GM10248 (cell line): ENCODE measurements at regions of chr1 and their contacts with region 1.

Region 1: GRCh38 chr1:150561974-150562445 is 12.8 kb downstream of the ADAMTSL4 start:
- DNase-seq: peak; percentile 85
- CTCF ChIP-seq: no peak

Region 2: GRCh38 chr1:150221552-150221951 is 340.5 kb before region 1 on chr1:
- CTCF ChIA-PET with region 1: no interaction called
- POLR2A ChIA-PET with region 1: no interaction called
- DNase-seq: no peak
- CTCF ChIP-seq: peak; percentile 43

Region 3: GRCh38 chr1:150259758-150260669 is 302.0 kb before region 1 on chr1:
- CTCF ChIA-PET with region 1: interaction called, 34 read pairs
- POLR2A ChIA-PET with region 1: no interaction called
- DNase-seq: no peak
- CTCF ChIP-seq: no peak

Region 4: DNA sequence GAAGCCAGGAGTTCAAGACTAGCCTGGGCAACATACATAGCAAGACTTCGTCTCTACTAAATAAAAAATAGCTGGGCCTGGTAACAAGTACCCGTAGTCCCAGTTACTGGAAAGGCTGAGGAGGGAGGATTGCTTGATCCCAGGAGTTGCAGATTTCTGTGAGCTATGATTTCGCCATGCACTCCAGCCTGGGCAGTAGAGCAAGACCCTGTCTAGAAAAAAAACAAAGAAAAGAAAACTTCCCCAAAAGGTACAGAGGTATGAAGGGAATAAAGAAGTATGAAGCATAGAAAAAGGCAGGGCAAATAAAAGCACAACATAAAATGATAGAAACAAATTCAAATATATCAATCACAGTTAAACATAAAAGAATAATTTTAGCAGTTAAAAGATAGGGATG is 169.4 kb before region 1 on chr1:
- CTCF ChIA-PET with region 1: no interaction called
- POLR2A ChIA-PET with region 1: no interaction called
- DNase-seq: no peak
- CTCF ChIP-seq: no peak

Region 5: GRCh38 chr1:150543500-150544141 is 18.4 kb before region 1 on chr1:
- CTCF ChIA-PET with region 1: interaction called, 119 read pairs
- POLR2A ChIA-PET with region 1: no interaction called
- DNase-seq: no peak
- CTCF ChIP-seq: no peak

Region 6: GRCh38 chr1:150621497-150622302 is 59.7 kb after region 1 on chr1:
- CTCF ChIA-PET with region 1: interaction called, 151 read pairs
- POLR2A ChIA-PET with region 1: interaction called, 7 read pairs
- DNase-seq: peak; percentile 55
- CTCF ChIP-seq: peak; percentile 65

Region 7: DNA sequence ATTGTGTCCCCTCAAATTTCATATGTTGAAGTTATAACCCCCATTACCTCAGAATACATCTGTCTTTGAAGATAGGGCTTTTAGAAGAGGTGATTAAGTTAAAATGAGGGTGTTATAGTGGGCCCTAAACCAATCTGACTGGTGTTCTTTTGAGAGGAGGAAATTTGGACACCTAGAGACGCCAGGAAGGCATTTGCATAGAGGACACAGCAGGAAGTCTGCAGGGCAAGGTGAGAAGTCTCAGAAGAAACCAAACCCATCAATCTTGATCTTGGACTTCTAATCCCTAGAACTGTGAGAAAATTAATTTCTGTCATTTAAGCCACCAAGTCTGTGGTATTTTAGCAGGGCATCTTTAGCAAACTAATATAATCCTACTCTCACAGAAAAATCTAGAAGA is 121.9 kb after region 1 on chr1:
- CTCF ChIA-PET with region 1: no interaction called
- POLR2A ChIA-PET with region 1: no interaction called
- DNase-seq: no peak
- CTCF ChIP-seq: no peak

Region 8: DNA sequence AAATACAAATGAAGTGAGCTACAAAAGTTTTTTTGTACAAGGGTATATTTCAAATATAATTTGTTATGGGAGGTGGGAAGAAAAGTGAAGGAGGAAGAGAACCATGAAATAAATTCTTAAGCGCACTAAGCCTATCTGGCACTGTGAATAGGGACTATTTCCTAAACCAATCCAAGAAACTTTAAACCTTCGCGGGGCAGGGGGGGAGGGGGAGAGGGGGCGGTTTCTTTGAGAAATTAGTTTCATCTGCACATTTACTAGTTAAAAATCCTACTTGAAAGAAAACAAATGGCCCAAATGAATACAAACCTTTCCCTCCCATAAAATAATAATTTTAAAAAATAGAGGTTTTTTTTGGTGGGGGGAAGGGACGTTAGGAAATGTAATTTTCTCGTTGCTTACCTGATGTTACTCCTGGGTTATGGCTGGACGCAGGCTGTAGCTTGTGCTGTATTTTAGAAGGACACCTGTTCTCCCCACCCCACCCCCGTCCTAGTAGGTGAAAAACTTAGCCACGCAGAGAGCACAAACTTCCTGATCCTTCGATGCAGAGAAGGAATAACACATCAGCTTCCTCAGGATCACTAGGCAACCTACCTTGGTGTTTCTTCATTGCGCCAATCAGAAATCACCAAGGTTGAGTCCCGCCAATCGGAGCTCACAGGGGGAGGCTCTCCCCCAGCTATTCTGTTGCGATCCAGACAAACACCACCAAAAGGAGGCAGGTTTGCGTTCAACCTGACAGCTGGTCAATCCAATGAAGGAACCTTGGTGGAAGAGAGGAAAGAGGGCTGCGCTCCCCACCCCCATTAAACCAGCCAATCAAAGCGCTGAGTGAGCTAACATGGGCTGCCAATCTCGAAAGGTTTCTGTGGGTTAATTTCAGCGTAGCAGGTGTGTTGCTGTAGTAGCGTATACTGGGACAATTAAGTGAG is 134.8 kb after region 1 on chr1 and contains the start of gene GOLPH3L:
- CTCF ChIA-PET with region 1: interaction called, 10 read pairs
- POLR2A ChIA-PET with region 1: interaction called, 3 read pairs
- DNase-seq: peak; percentile 86
- CTCF ChIP-seq: no peak

Region 9: GRCh38 chr1:151006327-151007052 is 444.5 kb after region 1 on chr1 and contains the start of gene MINDY1:
- CTCF ChIA-PET with region 1: interaction called, 11 read pairs
- POLR2A ChIA-PET with region 1: no interaction called
- DNase-seq: peak; percentile 71
- CTCF ChIP-seq: peak; percentile 28

Region 10: DNA sequence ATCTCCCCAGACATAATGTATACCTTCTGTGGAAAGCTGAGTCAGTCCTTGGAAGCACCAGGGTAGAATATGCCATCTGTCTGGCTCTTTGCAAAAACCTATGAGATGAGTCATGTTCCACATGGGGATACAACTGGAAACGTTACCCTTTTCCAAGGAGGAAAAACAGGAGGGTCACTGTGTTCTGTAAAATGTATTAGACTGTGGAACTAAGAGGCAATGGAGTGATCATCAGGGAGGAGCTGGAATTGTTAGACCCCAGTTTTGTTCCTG is 676.4 kb after region 1 on chr1:
- CTCF ChIA-PET with region 1: no interaction called
- POLR2A ChIA-PET with region 1: no interaction called
- DNase-seq: no peak
- CTCF ChIP-seq: no peak